Naive thymus-derived CD4-positive, alpha-beta T cell (primary cell): ENCODE measurements at regions of chr1 and their contacts with region 1.

Region 1: GRCh38 chr1:205658943-205659581 is 21.2 kb downstream of the SLC45A3 start:
- DNase-seq: peak; percentile 39 to 76 (median 65)
- ATAC-seq: peak; percentile 91
- H3K4me3 ChIP-seq: no peak overlapping the region
- H3K4me3 Mint-ChIP-seq: no peak overlapping the region
- H3K27ac ChIP-seq: no peak overlapping the region
- H3K27ac Mint-ChIP-seq: peak overlapping the region in 1 of 9 donors; percentile 50
- H3K4me1 ChIP-seq: no peaks in the 10 kb centered on the region
- H3K4me1 Mint-ChIP-seq: peaks cover 0 to 9% (median 0%) of the 10 kb centered on the region in 7 donors
- H3K27me3 ChIP-seq: no peaks in the 10 kb centered on the region
- H3K27me3 Mint-ChIP-seq: peaks cover 0 to 5% (median 0%) of the 10 kb centered on the region in 5 donors

Region 2: DNA sequence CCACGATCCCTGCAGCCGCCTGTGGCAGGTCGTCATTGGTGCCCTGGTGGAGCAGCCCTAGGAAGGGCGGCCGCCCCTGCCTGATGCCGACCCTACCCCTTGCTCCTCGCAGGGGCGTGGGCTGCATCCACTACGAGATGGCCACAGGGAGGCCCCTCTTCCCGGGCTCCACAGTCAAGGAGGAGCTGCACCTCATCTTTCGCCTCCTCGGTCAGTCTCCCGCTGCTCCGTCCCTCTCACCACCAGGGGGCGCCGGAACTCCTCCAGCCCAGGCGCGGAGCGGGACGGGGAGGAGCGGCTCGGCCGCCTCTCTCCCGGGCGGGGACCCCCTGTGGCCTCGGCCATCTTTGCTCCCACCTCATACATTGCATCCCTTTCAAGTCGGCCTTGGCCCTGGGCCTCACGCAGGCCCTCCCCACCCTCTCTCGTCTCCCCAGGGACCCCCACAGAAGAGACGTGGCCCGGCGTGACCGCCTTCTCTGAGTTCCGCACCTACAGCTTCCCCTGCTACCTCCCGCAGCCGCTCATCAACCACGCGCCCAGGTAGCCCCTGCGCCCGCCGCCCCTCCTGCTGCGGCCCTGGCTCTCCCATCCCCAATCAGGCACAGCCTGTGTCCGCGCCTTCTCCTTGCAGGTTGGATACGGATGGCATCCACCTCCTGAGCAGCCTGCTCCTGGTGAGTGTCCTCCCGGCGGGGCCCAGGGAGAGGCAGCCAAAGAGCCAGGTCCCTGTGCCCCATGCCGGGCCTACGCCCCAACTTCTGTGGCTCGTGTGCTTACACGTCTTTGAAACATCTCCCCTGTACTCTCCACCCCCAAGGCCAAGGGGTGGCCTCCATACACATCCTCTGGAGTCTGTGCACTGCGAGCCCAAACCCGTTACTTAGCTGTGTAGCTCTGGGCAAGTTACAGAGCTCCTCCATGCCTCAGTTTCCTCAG is 129.9 kb before region 1 on chr1:
- CTCF ChIA-PET with region 1: interaction called, 154 read pairs
- POLR2A ChIA-PET with region 1: no interaction called
- intact Hi-C with region 1: loop called (anchors 1 kb)
- DNase-seq: peak; percentile 58 to 90 (median 78)
- ATAC-seq: peak; percentile 82
- H3K4me3 ChIP-seq: no peak overlapping the region
- H3K4me3 Mint-ChIP-seq: peak overlapping the region in 9 of 10 donors; percentile 23 to 68 (median 62)
- H3K27ac ChIP-seq: no peak overlapping the region
- H3K27ac Mint-ChIP-seq: peak overlapping the region in 3 of 9 donors; percentile 8 to 58 (median 56)
- H3K4me1 ChIP-seq: no peaks in the 10 kb centered on the region
- H3K4me1 Mint-ChIP-seq: peaks cover 0 to 5% (median 0%) of the 10 kb centered on the region in 7 donors
- H3K27me3 ChIP-seq: no peaks in the 10 kb centered on the region
- H3K27me3 Mint-ChIP-seq: peaks cover 0 to 5% (median 0%) of the 10 kb centered on the region in 5 donors

Region 3: GRCh38 chr1:205711104-205712020 is 52.3 kb after region 1 on chr1:
- CTCF ChIA-PET with region 1: interaction called, 103 read pairs
- POLR2A ChIA-PET with region 1: no interaction called
- intact Hi-C with region 1: loop called (anchors 1 kb)
- DNase-seq: peak in 8 of 9 donors; percentile 36 to 72 (median 64)
- ATAC-seq: peak; percentile 91
- H3K4me3 ChIP-seq: no peak overlapping the region
- H3K4me3 Mint-ChIP-seq: no peak overlapping the region
- H3K27ac ChIP-seq: no peak overlapping the region
- H3K27ac Mint-ChIP-seq: peak overlapping the region in 6 of 9 donors; percentile 7 to 87 (median 15)
- H3K4me1 ChIP-seq: no peaks in the 10 kb centered on the region
- H3K4me1 Mint-ChIP-seq: peaks cover 9 to 28% (median 20%) of the 10 kb centered on the region in 7 donors
- H3K27me3 ChIP-seq: no peaks in the 10 kb centered on the region
- H3K27me3 Mint-ChIP-seq: no peaks in the 10 kb centered on the region

Region 4: GRCh38 chr1:205783904-205784303 is 124.8 kb after region 1 on chr1:
- CTCF ChIA-PET with region 1: interaction called, 43 read pairs
- POLR2A ChIA-PET with region 1: interaction called, 5 read pairs
- intact Hi-C with region 1: loop called (anchors 1 kb)
- DNase-seq: no peak
- ATAC-seq: no peak
- H3K4me3 ChIP-seq: no peak overlapping the region
- H3K4me3 Mint-ChIP-seq: no peak overlapping the region
- H3K27ac ChIP-seq: no peak overlapping the region
- H3K27ac Mint-ChIP-seq: no peak overlapping the region
- H3K4me1 ChIP-seq: peaks cover 0 to 8% of the 10 kb centered on the region in 2 donors
- H3K4me1 Mint-ChIP-seq: peaks cover 6 to 16% (median 9%) of the 10 kb centered on the region in 7 donors
- H3K27me3 ChIP-seq: no peaks in the 10 kb centered on the region
- H3K27me3 Mint-ChIP-seq: no peaks in the 10 kb centered on the region

Region 5: DNA sequence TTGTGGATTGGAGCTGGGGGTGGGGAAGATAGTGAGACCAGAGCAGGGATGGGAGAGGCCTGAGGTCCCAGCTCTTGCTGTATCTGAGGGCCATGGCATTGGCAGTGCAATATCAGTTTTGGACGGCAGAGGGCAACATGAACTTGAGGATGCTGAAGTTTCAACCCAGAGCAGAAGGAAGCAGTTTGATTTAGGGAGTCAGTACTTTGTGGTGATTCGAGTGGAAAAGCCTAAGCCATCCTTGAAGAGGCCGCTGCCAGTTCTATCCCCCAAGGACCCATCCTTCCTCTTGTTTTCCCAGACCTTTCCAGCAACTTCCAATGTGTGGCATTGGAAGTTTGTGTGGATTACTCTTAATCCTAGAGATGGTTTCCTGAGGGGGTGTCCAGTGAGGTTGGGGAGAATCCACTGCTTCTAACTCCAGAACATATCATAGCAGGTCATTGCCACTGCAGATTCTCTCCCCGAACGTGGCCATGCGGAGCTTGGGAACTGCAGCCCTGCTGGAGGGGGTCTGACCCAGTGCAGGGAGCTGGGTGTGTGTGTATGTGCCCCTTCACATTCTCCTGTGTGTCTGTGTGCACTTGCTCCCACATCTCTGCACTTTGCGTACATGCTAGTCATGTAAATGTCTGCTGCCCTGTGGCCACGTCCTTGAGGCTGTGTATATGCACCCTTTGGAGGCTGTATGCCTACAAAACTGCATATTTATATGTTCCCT is 260.1 kb after region 1 on chr1:
- CTCF ChIA-PET with region 1: interaction called, 4 read pairs
- POLR2A ChIA-PET with region 1: no interaction called
- intact Hi-C with region 1: loop called in 1 of 2 experiments (anchors 1 kb)
- DNase-seq: peak; percentile 11 to 66 (median 47)
- ATAC-seq: peak; percentile 80
- H3K4me3 ChIP-seq: no peak overlapping the region
- H3K4me3 Mint-ChIP-seq: no peak overlapping the region
- H3K27ac ChIP-seq: no peak overlapping the region
- H3K27ac Mint-ChIP-seq: no peak overlapping the region
- H3K4me1 ChIP-seq: no peaks in the 10 kb centered on the region
- H3K4me1 Mint-ChIP-seq: no peaks in the 10 kb centered on the region
- H3K27me3 ChIP-seq: no peaks in the 10 kb centered on the region
- H3K27me3 Mint-ChIP-seq: peaks cover 0 to 3% (median 0%) of the 10 kb centered on the region in 5 donors